GM12878 (cell line): ENCODE measurements at regions of chr20 and their contacts with region 1.

Region 1: GRCh38 chr20:33299111-33299603 is 16.1 kb downstream of the BPIFB1 start:
- DNase-seq: no peak
- ATAC-seq: peak; percentile 97
- H3K4me3 ChIP-seq: no peak overlapping the region
- H3K27ac ChIP-seq: no peak overlapping the region
- H3K4me1 ChIP-seq: no peaks in the 10 kb centered on the region
- H3K27me3 ChIP-seq: peaks cover 0 to 2% of the 10 kb centered on the region in 2 experiments; a peak in 2 of 4 replicates
- CTCF ChIP-seq: peak; percentile 85 to 94 (median 91)
- EP300 ChIP-seq: no peak
- POLR2A ChIP-seq: no peak
- RAD21 ChIP-seq: peak; percentile 64

Region 2: DNA sequence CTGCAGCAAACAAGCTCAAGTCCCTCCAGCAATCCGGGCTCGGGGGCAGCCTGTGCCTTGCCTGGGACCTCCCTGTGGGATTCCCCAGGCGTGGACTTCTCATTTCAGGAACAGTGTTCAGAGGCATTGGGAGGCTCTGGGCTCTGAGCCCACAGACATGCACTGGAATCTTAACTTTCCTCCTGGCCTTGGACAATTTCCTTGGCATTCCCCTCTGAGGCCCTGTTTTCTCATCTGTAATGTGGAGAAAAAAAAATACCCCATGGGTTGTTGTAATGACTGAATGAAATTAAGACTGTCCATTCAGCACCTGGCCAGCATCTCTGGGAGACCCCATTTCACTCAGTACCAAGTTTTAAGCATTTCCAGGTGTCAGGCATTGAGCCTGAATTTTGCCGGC is 202.2 kb before region 1 on chr20:
- CTCF ChIA-PET with region 1: interaction called, 4 read pairs
- POLR2A ChIA-PET with region 1: no interaction called
- RAD21 ChIA-PET with region 1: no interaction called
- SMC1A ChIA-PET with region 1: no interaction called
- in situ Hi-C with region 1: no loop called
- intact Hi-C with region 1: loop called (anchors 2 kb)
- DNase-seq: no peak
- ATAC-seq: no peak
- H3K4me3 ChIP-seq: no peak overlapping the region
- H3K27ac ChIP-seq: no peak overlapping the region
- H3K4me1 ChIP-seq: no peaks in the 10 kb centered on the region
- H3K27me3 ChIP-seq: no peaks in the 10 kb centered on the region
- CTCF ChIP-seq: no peak
- EP300 ChIP-seq: no peak
- POLR2A ChIP-seq: no peak
- RAD21 ChIP-seq: no peak